ENCODE measurements at regions of chr2 and their contacts with region 1.

Region 1: GRCh38 chr2:142339261-142339660 is 208.4 kb upstream of the LRP1B start:
- DNase-seq: no peak
- ATAC-seq: no peak

Region 2: DNA sequence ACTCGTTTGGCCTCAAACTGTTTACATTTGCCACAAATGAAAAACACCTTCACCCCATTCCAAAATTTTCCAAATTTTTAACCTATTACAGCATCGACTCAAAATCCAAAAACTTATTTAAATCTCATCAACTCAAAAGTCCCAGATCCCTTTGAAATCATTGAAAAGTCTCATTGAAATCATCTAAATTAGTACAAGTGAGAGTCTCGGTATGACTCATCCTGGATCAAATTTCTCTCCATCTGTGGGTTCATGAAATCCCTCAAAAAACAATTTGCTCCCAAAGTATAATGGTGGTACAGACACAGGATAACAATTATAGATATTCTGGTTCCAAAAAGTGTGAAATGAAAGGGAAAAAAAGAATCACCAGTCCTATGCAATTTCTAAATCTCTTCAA is 273.6 kb before region 1 on chr2:
- intact Hi-C with region 1: loop called (anchors 5 kb)
- DNase-seq: no peak
- ATAC-seq: no peak